ENCODE measurements at regions of chr7 and their contacts with region 1.

Region 1: GRCh38 chr7:104923010-104923421 is 91.0 kb upstream of the KMT2E start:
- DNase-seq: peak; percentile 73
- H3K4me3 ChIP-seq: no peak overlapping the region
- H3K27ac ChIP-seq: peak overlapping the region; percentile 9
- H3K4me1 ChIP-seq: no peaks in the 10 kb centered on the region
- H3K27me3 ChIP-seq: no peaks in the 10 kb centered on the region
- CTCF ChIP-seq: peak; percentile 93 to 96

Region 2: DNA sequence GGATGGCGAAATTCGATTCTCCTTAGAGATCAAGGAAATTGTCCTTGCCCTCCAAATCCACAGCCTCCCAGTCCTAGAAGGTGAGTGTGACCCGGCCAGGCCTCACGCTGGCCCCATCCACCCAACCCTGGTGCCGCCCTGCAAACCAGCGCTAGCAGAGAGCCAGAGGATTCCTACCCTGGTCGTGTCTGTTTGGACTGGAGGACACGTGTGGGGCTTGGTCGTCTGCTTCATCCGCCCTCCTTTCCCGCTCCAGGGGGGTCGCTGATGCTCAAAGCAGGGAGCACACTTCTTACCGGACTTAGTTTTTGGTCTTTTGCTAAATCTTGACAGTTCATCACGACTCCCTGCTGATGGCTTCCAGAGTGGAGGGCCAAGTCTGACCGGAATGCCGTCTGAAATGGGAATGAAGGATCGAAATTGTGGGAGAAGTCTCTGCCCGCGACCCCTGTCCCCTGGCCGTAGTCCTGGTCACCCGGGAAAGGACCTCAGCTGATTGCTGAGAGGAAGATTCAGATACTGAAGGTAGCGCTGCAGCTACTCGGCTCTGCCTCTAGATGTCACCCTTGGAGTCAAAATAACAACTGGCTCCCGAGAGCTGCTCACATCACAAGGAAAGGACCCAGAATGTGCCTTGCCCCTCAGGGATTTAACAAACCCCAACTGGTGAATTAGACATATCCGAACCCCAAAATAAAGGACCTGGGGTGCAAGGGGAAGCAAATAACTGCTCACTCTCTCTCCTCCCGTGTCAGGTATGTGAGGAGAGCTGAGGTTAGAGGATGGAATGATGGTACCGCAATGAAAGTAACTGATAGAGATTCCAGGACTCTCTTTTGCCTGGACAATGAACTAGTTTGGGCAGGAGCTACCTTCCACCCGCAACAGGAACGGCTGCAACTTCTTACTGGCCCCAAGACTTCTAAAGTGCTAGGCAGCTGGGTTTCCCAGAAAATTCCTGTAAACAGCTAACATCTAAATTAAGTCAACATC is 691.7 kb before region 1 on chr7:
- CTCF ChIA-PET with region 1: no interaction called
- dilution Hi-C with region 1: no loop called
- in situ Hi-C with region 1: no loop called
- intact Hi-C with region 1: loop called (anchors 1 kb)
- DNase-seq: peak; percentile 30
- H3K4me3 ChIP-seq: no peak overlapping the region
- H3K27ac ChIP-seq: no peak overlapping the region
- H3K4me1 ChIP-seq: no peaks in the 10 kb centered on the region
- H3K27me3 ChIP-seq: no peaks in the 10 kb centered on the region
- CTCF ChIP-seq: peak; percentile 76 to 88

Region 3: DNA sequence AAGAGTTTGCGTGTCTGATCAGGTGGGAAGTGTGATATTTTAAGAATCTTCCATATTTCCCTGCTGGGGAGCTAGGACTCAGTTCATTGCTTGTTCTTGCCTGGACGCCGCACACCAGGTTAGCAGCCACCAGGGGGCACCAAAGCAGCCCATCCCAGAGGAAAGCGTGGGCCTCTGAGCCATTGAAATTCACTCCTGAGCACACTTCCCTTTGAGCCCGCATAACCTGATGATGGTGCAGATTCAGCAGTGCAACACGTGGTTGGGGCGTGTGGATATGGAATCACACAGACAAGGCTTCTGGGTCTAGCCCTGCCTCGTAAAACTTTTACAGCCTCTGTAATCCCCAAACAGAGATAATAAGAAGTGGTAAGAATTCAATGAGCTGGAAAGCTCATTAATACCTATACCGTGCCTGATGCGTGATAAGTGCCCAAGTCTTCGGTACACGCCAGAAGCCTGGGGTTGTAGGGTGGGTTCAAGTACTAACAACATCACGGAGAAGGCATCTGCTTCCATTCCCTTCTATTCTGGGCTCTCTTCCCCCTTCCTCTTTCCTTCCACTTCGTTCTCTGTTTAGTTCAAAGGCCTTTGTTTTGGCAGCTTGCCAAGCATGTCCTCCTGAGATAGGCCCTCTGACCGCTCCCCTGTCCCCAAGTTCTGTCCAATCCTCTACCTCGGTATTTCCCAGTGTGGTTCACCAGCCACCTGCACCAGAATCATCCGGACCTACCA is 39.1 kb before region 1 on chr7:
- CTCF ChIA-PET with region 1: interaction called, 36 read pairs
- dilution Hi-C with region 1: no loop called
- in situ Hi-C with region 1: loop called in 1 of 2 experiments (anchors 5 kb)
- intact Hi-C with region 1: loop called (anchors 1 kb)
- DNase-seq: peak; percentile 73
- H3K4me3 ChIP-seq: no peak overlapping the region
- H3K27ac ChIP-seq: no peak overlapping the region
- H3K4me1 ChIP-seq: no peaks in the 10 kb centered on the region
- H3K27me3 ChIP-seq: no peaks in the 10 kb centered on the region
- CTCF ChIP-seq: peak; percentile 96 to 97

Region 4: GRCh38 chr7:104895522-104896236 is 27.3 kb before region 1 on chr7:
- CTCF ChIA-PET with region 1: no interaction called
- dilution Hi-C with region 1: no loop called
- in situ Hi-C with region 1: no loop called
- intact Hi-C with region 1: no loop called
- DNase-seq: no peak
- H3K4me3 ChIP-seq: no peak overlapping the region
- H3K27ac ChIP-seq: no peak overlapping the region
- H3K4me1 ChIP-seq: peaks cover 7% of the 10 kb centered on the region
- H3K27me3 ChIP-seq: no peaks in the 10 kb centered on the region
- CTCF ChIP-seq: no peak

Region 5: DNA sequence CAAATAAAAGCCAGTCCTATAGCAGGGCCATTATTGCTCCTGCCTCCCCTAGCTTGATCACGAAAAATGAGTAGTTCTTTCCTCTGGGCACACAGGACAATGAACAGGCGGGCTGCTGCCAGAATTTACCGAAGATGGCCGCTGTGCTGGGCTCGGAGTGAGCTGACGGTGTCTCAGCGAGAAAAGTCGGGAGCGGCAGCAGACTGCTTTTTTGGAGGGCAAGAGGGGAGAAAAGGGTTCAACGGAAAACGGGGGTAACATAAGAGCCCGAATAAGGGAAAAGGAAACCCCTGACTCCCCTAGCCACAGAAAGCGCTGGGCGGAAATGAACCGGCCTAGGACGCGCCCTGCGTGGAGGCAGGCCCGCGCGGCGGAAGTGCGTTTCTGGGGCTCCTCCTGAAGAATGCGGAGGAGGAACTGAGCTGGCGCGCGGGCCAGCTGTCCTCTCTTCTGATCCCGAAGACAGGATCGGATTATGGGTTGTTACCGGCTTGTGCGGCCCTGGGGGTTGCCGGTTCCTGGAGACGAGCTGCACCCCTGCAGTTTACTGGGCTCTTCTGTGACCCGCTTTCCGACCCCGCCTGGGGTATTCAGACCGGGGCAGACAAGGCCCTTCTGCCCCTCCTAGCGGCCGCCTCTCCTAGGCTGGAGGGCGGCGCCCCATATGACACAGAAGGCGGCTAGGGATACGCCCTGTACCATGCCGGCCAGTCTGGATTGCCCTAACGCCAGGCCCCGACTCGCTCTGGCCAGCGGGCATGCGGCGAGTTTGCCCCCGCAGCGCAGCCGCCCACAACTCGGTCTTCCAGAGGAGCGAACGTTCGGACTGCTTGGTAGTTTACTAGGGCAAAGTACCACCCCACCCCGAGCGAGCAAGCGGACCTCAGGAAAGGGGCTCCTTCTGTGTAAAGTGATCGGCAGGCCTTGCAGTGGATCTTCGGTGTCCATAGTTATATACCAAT is 60.8 kb after region 1 on chr7:
- CTCF ChIA-PET with region 1: interaction called, 3 read pairs
- dilution Hi-C with region 1: no loop called
- in situ Hi-C with region 1: loop called in 1 of 2 experiments (anchors 10 kb)
- intact Hi-C with region 1: loop called (anchors 1 kb)
- DNase-seq: peak; percentile 86
- H3K4me3 ChIP-seq: peak overlapping the region; percentile 53 to 74 (median 54)
- H3K27ac ChIP-seq: peak overlapping the region; percentile 99
- H3K4me1 ChIP-seq: peaks cover 52% of the 10 kb centered on the region
- H3K27me3 ChIP-seq: no peaks in the 10 kb centered on the region
- CTCF ChIP-seq: peak; percentile 3 to 59

Region 6: DNA sequence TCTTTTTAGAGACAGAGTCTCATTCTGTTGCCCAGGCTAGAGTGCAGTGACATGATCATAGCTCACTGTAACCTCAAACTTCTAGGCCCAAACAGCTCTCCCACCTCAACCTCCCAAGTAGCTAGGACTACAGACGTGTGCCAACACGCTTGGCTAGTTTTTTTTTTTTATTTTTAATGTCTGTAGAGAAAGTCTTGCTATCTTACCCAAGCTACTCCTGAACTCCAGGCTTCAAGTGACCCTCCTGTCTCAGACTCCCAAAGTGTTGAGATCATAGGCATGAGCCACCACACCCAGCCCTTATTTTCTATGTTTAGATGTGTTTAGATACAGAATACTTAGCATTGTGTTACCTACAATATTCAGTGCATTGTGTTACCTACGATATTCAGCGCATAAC is 137.4 kb after region 1 on chr7:
- CTCF ChIA-PET with region 1: no interaction called
- dilution Hi-C with region 1: no loop called
- in situ Hi-C with region 1: no loop called
- intact Hi-C with region 1: loop called (anchors 5 kb)
- DNase-seq: peak; percentile 47
- H3K4me3 ChIP-seq: no peak overlapping the region
- H3K27ac ChIP-seq: no peak overlapping the region
- H3K4me1 ChIP-seq: peaks cover 6% of the 10 kb centered on the region
- H3K27me3 ChIP-seq: no peaks in the 10 kb centered on the region
- CTCF ChIP-seq: no peak

Region 7: DNA sequence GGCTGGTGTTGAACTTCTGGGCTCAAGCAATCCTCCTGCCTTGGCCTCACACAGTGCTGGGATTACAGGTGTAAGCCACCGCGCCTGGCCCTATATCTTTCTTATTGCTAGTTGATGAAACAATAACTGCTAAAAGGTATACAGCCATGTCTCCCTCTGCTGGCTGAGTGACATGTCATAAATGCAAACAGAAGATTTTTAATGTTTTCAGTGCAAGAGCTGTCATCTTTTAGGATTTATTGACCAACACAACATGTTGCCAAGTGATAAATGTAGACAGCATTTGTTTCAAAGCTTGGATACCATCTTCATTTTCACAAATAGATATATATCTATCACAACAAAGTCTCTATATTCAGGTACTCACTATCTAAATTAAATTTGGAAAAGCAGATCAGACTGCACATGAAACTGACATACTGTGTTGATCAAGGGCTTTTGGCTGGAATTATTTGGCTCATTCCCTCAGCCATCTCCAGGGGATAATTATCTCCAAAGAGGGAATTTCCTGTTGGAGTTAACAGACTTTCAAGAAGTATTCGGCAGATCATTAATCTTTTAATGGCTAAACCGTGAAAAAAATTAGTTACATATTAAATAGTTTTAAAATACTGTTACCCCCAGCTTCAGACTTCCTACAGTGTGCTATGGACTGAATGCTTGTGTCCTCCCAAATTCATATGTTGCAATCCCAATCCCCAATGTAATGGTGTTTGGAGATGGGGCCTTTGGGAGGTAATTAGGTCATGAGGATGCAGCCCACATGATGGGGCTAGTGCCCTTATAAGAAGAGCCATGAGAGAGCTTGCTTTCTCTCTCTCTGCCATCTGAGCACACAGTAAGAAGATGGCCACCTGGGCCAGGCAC is 507.0 kb after region 1 on chr7:
- CTCF ChIA-PET with region 1: no interaction called
- dilution Hi-C with region 1: no loop called
- in situ Hi-C with region 1: no loop called
- intact Hi-C with region 1: loop called (anchors 1 kb)
- DNase-seq: peak; percentile 39
- H3K4me3 ChIP-seq: no peak overlapping the region
- H3K27ac ChIP-seq: no peak overlapping the region
- H3K4me1 ChIP-seq: no peaks in the 10 kb centered on the region
- H3K27me3 ChIP-seq: no peaks in the 10 kb centered on the region
- CTCF ChIP-seq: peak; percentile 57 to 66